CD8-positive, alpha-beta memory T cell (primary cell): ENCODE measurements at regions of chr10 and their contacts with region 1.

Region 1: GRCh38 chr10:43204943-43205671 is 61.8 kb downstream of the RASGEF1A start:
- DNase-seq: peak in 4 of 5 donors; percentile 32 to 67 (median 40)
- H3K4me3 ChIP-seq: no peak overlapping the region
- H3K4me3 Mint-ChIP-seq: no peak overlapping the region
- H3K27ac ChIP-seq: no peak overlapping the region
- H3K27ac Mint-ChIP-seq: peak overlapping the region in 4 of 8 donors; percentile 29 to 75 (median 60)
- H3K4me1 ChIP-seq: peaks cover 14% of the 10 kb centered on the region
- H3K4me1 Mint-ChIP-seq: peaks cover 6 to 21% (median 6%) of the 10 kb centered on the region in 3 donors
- H3K27me3 ChIP-seq: no peaks in the 10 kb centered on the region
- H3K27me3 Mint-ChIP-seq: no peaks in the 10 kb centered on the region

Region 2: DNA sequence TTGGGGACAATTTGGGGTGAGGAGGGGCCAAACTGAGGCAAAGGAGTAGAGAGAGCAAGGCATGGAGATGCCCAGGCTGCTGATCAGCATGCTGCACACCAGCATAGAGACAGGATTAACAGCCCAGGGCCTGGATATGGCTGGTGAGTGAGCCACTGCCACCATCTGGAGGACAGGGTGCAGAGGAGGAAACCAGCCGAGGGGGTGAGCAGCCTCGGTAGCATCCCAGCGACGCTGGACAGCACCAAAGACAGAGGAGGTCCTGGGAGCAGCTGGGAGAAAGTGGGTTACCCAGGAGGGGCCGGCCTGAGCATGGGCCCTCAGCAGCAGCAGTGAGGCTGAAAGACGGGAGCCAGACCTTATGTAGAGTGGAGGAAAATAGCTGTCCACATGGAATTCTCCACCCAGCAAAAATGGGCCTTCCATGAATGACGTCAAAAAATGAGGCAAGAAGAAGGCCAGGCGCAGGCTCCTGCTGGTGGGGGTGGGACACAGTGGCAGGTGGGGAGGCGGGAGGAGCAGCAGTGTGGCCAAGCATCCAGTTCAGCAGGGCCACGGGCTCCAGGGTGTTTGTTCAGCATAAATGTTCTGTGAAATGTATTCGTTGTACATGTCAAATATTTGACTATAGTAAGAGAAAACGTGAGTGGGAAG is 111.6 kb before region 1 on chr10:
- CTCF ChIA-PET with region 1: no interaction called
- POLR2A ChIA-PET with region 1: no interaction called
- DNase-seq: no peak
- H3K4me3 ChIP-seq: no peak overlapping the region
- H3K4me3 Mint-ChIP-seq: no peak overlapping the region
- H3K27ac ChIP-seq: no peak overlapping the region
- H3K27ac Mint-ChIP-seq: no peak overlapping the region
- H3K4me1 ChIP-seq: no peaks in the 10 kb centered on the region
- H3K4me1 Mint-ChIP-seq: no peaks in the 10 kb centered on the region
- H3K27me3 ChIP-seq: no peaks in the 10 kb centered on the region
- H3K27me3 Mint-ChIP-seq: peaks cover 6 to 20% of the 10 kb centered on the region in 2 donors

Region 3: DNA sequence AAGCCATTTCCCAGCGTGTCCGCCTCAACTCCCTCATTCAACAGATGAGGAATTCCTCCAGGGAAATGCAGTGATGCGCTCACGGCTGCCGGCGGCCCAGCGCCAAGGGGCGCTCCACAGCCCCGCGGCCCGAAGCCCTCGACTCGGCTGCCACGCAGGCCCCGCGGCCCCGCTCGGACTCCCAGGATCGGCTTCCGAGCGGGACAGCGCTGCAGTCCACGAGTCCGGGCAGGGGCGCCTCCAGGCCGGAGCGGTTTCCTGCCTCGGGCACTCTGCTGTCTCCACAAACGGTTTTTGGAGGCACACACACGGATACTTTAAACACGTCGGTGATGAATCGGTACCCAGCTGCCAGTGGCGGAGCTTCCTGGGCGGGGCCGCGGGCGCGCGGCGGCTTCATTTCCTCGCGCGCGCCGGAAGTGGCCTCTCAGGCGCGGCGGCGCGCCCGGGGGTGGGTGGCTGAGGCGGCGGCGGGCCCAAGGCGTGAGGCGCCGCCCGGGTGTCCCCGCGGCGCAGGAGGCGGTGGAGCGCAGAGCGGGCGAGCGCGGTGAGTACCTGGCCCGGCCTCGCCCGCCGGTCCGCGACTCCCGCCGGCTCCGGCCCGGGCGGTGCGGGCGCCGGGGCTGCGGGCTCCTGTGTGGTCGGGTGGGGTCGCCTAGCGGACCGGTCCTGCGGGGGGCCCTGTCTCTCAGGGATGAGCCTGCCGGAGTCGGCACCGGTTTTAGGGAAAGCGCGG is 66.9 kb before region 1 on chr10 and contains the start of gene CSGALNACT2:
- CTCF ChIA-PET with region 1: interaction called, 21 read pairs
- POLR2A ChIA-PET with region 1: interaction called, 3 read pairs
- DNase-seq: peak; percentile 80 to 91 (median 89)
- H3K4me3 ChIP-seq: peak within 1 kb of the TSS; percentile 96
- H3K4me3 Mint-ChIP-seq: peak within 1 kb of the TSS; percentile 95 to 99 (median 99)
- H3K27ac ChIP-seq: peak within 1 kb of the TSS; percentile 92
- H3K27ac Mint-ChIP-seq: peak within 1 kb of the TSS; percentile 93 to 100 (median 98)
- H3K4me1 ChIP-seq: peaks cover 46% of the 10 kb centered on the region
- H3K4me1 Mint-ChIP-seq: peaks cover 41 to 60% (median 56%) of the 10 kb centered on the region in 3 donors
- H3K27me3 ChIP-seq: no peaks in the 10 kb centered on the region
- H3K27me3 Mint-ChIP-seq: peaks cover 0 to 4% of the 10 kb centered on the region in 2 donors
- total RNA-seq, gene CSGALNACT2: 21.0 to 21.7 TPM

Region 4: GRCh38 chr10:43193496-43194080 is 11.5 kb before region 1 on chr10:
- CTCF ChIA-PET with region 1: interaction called, 11 read pairs
- POLR2A ChIA-PET with region 1: no interaction called
- DNase-seq: no peak
- H3K4me3 ChIP-seq: no peak overlapping the region
- H3K4me3 Mint-ChIP-seq: no peak overlapping the region
- H3K27ac ChIP-seq: no peak overlapping the region
- H3K27ac Mint-ChIP-seq: peak overlapping the region in 4 of 8 donors; percentile 17 to 75 (median 58)
- H3K4me1 ChIP-seq: no peaks in the 10 kb centered on the region
- H3K4me1 Mint-ChIP-seq: peaks cover 0 to 3% (median 0%) of the 10 kb centered on the region in 3 donors
- H3K27me3 ChIP-seq: no peaks in the 10 kb centered on the region
- H3K27me3 Mint-ChIP-seq: peaks cover 0 to 1% of the 10 kb centered on the region in 2 donors

Region 5: DNA sequence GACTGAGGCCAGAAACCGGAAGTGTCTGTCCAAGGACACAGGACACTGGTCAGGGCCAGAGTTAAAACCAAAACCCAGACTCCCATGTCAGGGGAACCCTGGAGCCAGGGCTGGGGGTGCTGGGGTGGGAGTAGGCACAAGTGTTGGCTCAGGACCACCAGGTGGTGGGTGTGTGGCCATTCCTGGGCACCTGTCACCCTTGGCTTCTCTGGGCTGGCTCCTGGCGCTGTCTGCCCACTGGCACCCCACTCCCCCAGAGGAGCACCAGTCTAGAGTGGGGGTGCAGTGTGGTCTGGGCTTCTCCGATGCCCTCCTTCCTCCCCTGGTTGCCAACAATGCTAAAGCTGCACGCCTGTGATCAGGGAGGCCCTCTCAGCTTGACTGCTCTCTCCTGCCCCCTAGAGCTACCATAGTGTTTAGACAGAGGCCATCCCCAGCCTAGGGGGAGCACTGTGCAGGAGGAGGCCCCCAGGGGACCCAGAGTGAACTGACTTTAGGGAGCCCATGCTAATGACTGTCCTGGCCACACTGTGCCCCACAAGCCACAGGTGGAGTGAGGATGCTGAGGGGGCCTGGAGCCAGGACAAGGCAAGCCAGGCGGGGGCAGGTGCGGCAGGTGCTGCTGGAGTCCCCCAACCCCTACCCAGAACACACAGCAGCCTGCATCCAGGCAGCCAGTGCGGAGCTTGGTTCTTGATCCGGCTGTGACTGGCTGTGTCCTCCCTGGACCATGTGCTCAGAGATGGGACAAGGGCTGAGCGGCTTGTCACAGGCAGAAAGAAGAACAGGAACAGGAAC is 50.7 kb after region 1 on chr10:
- CTCF ChIA-PET with region 1: interaction called, 37 read pairs
- POLR2A ChIA-PET with region 1: no interaction called
- DNase-seq: peak in 4 of 5 donors; percentile 15 to 69 (median 39)
- H3K4me3 ChIP-seq: no peak overlapping the region
- H3K4me3 Mint-ChIP-seq: peak overlapping the region in 5 of 7 donors; percentile 51 to 75 (median 65)
- H3K27ac ChIP-seq: no peak overlapping the region
- H3K27ac Mint-ChIP-seq: peak overlapping the region; percentile 30 to 96 (median 81)
- H3K4me1 ChIP-seq: peaks cover 22% of the 10 kb centered on the region
- H3K4me1 Mint-ChIP-seq: peaks cover 15 to 62% (median 26%) of the 10 kb centered on the region in 3 donors
- H3K27me3 ChIP-seq: no peaks in the 10 kb centered on the region
- H3K27me3 Mint-ChIP-seq: peaks cover 0 to 2% of the 10 kb centered on the region in 2 donors

Region 6: DNA sequence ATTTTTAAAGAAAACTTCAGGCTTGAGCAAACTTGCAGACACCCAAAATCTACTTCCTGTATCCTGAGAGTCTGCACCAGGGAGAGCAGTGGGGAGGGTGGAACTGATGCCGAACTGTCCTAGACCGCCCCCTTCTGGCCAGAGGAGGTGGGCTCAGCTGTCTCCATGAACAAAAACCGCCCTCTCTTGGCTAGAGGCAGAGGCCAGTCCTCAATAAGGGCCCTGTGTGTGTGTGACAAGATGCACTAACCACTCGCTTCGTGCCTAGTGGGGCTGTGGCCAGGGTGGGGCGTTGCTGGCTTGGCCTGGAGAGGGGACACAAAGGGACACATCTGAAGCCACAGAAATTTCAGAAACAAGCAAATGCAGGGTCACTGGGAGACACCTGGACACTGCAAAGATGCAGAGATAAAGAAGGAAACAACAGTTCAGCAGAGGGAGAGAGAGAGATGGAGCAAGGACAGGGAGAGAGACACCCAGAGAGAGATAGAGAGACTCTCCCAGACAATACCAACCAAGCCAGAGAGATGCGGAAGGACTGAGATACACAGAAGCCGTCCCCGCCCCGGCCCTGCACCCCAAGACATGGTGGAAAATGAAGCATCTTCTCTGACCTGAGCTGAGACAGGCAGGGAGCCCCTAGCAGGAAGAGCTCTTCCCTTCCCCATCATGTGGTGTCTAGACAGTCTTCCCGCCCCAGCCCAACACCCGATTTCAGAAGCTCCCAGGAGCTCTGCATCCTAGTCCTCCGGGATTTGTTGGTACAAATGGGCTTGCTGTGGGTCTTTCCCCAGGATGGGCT is 143.6 kb after region 1 on chr10:
- CTCF ChIA-PET with region 1: interaction called, 13 read pairs
- POLR2A ChIA-PET with region 1: no interaction called
- DNase-seq: peak; percentile 77 to 90 (median 80)
- H3K4me3 ChIP-seq: no peak overlapping the region
- H3K4me3 Mint-ChIP-seq: peak overlapping the region in 1 of 7 donors; percentile 9
- H3K27ac ChIP-seq: no peak overlapping the region
- H3K27ac Mint-ChIP-seq: peak overlapping the region in 6 of 8 donors; percentile 4 to 49 (median 42)
- H3K4me1 ChIP-seq: peaks cover 11% of the 10 kb centered on the region
- H3K4me1 Mint-ChIP-seq: peaks cover 15 to 30% (median 19%) of the 10 kb centered on the region in 3 donors
- H3K27me3 ChIP-seq: no peaks in the 10 kb centered on the region
- H3K27me3 Mint-ChIP-seq: peaks cover 15 to 24% of the 10 kb centered on the region in 2 donors